ENCODE measurements at regions of chr20 and their contacts with region 1.

Region 1: DNA sequence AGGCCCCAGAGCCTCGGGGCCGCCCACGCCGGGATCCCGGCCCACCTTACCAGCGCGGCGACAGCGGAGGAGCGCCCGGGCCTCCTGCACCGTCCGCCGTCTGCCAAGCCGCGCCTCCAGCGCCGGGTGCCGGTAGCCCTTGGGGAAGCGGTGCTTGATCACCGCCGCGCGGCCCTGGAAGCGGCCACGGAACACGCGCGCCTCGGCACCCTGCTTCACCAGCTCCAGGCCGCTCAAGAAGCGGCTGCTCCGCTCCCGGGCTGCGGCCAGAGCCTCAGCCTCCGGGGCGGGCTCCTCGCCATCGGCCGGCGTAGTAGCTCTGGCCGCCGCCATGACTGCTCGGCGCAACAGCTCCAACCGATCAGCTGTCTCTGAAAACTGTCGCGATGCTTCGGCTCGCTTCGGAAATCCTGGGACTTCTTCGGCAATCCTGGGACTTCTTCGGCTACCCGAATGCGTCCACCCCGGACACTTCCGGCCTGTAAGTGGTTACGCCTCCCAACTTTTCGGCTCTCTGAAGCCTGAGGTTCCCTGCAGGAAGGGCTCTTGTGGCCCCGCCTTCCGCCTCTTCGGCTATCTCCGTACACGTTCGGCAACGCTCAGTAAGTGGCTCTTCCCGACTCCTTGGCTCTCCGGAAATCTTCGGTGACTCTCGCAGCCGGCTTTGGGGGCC is at the start of gene TP53RK:
- DNase-seq: peak; percentile 99 to 100
- ATAC-seq: peak; percentile 94
- total RNA-seq, gene TP53RK: 7.9 to 9.5 TPM

Region 2: DNA sequence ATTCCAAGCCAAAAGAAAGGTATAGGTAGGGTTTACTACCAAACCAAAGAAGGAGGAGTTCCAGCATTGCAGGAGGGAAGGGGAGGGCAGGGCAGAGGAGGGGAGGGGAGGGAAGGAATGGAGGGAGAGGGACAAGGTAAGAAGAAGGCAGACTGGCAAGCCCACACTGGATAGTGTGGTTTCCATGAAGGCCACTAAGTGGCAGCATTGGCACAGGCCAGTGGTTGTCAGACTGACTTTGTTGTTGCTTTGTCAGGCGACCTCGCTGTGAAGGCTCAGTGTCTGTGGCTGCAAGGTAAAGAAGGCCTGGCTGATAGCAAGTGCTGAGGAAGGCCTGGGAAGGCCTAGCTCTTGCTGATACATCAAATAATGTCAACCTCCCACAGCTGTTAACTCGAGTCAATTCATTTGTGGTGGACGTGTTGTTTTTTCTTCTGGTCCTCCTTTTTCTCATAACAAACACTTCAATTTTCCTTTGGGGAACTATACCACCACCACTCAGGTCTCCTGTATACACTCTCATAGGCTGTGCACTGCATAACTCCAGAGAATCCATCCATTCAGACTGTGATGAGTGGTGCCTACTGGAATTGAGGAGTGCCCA is 168.1 kb before region 1 on chr20:
- intact Hi-C with region 1: loop called in 1 of 2 experiments (anchors 10 kb)
- DNase-seq: peak in 1 of 2 donors; percentile 51
- ATAC-seq: peak; percentile 99

Region 3: GRCh38 chr20:46562373-46563169 is 126.6 kb before region 1 on chr20:
- intact Hi-C with region 1: loop called in 1 of 2 experiments (anchors 10 kb)
- DNase-seq: peak; percentile 42 to 75
- ATAC-seq: peak; percentile 81

Region 4: GRCh38 chr20:46720776-46721425 is 31.7 kb after region 1 on chr20:
- intact Hi-C with region 1: no loop called
- DNase-seq: no peak
- ATAC-seq: no peak